ENCODE measurements at regions of chr21 and their contacts with region 1.

Region 1: DNA sequence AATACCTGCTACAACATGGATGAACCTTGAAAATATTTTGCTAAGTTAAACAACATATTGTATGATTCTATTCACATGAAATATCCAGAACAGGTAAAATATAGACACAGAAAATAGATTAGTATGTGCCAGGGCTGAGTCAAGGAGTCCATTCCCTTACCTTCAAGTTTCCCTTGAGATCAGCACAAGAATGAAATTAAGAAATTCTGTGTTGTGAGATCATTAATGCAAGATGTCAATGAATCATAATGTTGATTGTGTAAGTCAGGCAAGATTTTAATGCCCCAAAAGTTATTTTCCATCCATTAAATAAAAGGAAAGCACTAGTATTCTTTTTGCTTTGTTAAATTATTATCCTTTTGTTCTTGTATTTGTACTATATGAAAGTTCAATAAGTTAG is 139.4 kb downstream of the MRPL39 start:
- DNase-seq: no peak
- H3K4me3 ChIP-seq: no peak overlapping the region
- H3K4me3 Mint-ChIP-seq: no peak overlapping the region
- H3K27ac Mint-ChIP-seq: no peak overlapping the region
- H3K4me1 ChIP-seq: no peaks in the 10 kb centered on the region
- H3K4me1 Mint-ChIP-seq: no peaks in the 10 kb centered on the region
- H3K27me3 ChIP-seq: no peaks in the 10 kb centered on the region
- H3K27me3 Mint-ChIP-seq: no peaks in the 10 kb centered on the region
- CTCF ChIP-seq: no peak

Region 2: GRCh38 chr21:25453524-25453923 is 14.4 kb before region 1 on chr21:
- CTCF ChIA-PET with region 1: no interaction called
- POLR2A ChIA-PET with region 1: interaction called, 11 read pairs
- intact Hi-C with region 1: no loop called
- DNase-seq: no peak
- H3K4me3 ChIP-seq: no peak overlapping the region
- H3K4me3 Mint-ChIP-seq: no peak overlapping the region
- H3K27ac Mint-ChIP-seq: no peak overlapping the region
- H3K4me1 ChIP-seq: no peaks in the 10 kb centered on the region
- H3K4me1 Mint-ChIP-seq: no peaks in the 10 kb centered on the region
- H3K27me3 ChIP-seq: no peaks in the 10 kb centered on the region
- H3K27me3 Mint-ChIP-seq: no peaks in the 10 kb centered on the region
- CTCF ChIP-seq: no peak

Measured in Caco-2 (cell line).